A673 (cell line): ENCODE measurements at regions of chr1 and their contacts with region 1.

Region 1: GRCh38 chr1:161382214-161383019 is 14.7 kb upstream of the CFAP126 start:
- DNase-seq: peak; percentile 76
- H3K4me3 ChIP-seq: no peak overlapping the region
- H3K27ac ChIP-seq: no peak overlapping the region
- H3K4me1 ChIP-seq: peaks cover 6% of the 10 kb centered on the region
- H3K27me3 ChIP-seq: no peaks in the 10 kb centered on the region
- CTCF ChIP-seq: peak; percentile 72

Region 2: GRCh38 chr1:161185282-161185682 is 197.1 kb before region 1 on chr1:
- CTCF ChIA-PET with region 1: interaction called, 3 read pairs
- POLR2A ChIA-PET with region 1: no interaction called
- intact Hi-C with region 1: loop called (anchors 5 kb)
- DNase-seq: peak; percentile 85
- H3K4me3 ChIP-seq: no peak overlapping the region
- H3K27ac ChIP-seq: peak overlapping the region; percentile 45
- H3K4me1 ChIP-seq: peaks cover 13% of the 10 kb centered on the region
- H3K27me3 ChIP-seq: no peaks in the 10 kb centered on the region
- CTCF ChIP-seq: no peak

Region 3: GRCh38 chr1:161209790-161210409 is 172.5 kb before region 1 on chr1:
- CTCF ChIA-PET with region 1: interaction called, 3 read pairs
- POLR2A ChIA-PET with region 1: no interaction called
- intact Hi-C with region 1: loop called (anchors 5 kb)
- DNase-seq: peak; percentile 85
- H3K4me3 ChIP-seq: no peak overlapping the region
- H3K27ac ChIP-seq: no peak overlapping the region
- H3K4me1 ChIP-seq: no peaks in the 10 kb centered on the region
- H3K27me3 ChIP-seq: no peaks in the 10 kb centered on the region
- CTCF ChIP-seq: peak; percentile 92

Region 4: GRCh38 chr1:161864577-161864976 is 482.2 kb after region 1 on chr1:
- CTCF ChIA-PET with region 1: no interaction called
- POLR2A ChIA-PET with region 1: no interaction called
- intact Hi-C with region 1: no loop called
- DNase-seq: peak; percentile 33
- H3K4me3 ChIP-seq: no peak overlapping the region
- H3K27ac ChIP-seq: no peak overlapping the region
- H3K4me1 ChIP-seq: peaks cover 5% of the 10 kb centered on the region
- H3K27me3 ChIP-seq: no peaks in the 10 kb centered on the region
- CTCF ChIP-seq: peak; percentile 54